Activated B cell treated with CpG ODN at 0.5 μM for 24 hours (primary cell): ENCODE measurements at regions of chr17 and their contacts with region 1.

Region 1: GRCh38 chr17:40647624-40648383 is at the start of gene SMARCE1:
- DNase-seq: peak; percentile 75
- ATAC-seq: peak; percentile 84
- H3K4me3 Mint-ChIP-seq: peak within 1 kb of the TSS; percentile 98
- H3K27ac Mint-ChIP-seq: peak within 1 kb of the TSS; percentile 99
- H3K4me1 Mint-ChIP-seq: peaks cover 48% of the 10 kb centered on the region
- H3K27me3 Mint-ChIP-seq: no peaks in the 10 kb centered on the region
- CTCF ChIP-seq: no peak
- total RNA-seq, gene SMARCE1: 140 TPM in 2 replicates

Region 2: DNA sequence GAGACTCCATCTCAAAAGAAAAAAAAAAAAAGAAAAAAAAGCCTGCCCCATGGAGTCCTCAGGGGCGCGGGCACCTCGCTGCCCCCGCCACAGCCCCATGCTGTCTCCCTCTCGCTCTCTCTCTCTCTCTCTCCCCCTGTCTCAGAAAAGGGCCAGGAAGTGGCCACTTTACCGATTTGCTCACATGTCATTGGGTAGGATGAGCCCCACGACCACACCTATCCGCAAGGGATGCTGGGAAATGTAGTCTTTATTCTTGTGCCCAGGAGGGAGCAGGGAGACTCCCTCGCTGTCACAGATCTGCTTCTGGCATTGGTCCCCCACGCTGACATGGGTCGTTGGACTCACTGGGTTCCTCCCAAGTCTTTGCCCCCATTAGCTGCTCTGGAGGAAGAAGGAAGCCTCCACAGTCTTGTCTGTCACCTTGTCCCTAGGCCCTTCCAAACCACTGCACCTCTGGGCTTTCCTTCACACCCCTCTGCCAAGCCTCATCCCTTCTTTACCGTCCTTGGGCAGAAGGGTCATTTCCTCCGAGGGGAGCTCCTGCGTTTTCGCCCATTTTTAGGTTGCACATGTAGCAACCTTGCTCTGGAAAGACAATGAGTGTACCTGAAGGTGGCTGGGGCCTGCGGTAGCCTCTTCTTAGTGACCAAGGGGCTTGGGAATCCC is 276.4 kb before region 1 on chr17:
- CTCF ChIA-PET with region 1: no interaction called
- POLR2A ChIA-PET with region 1: no interaction called
- intact Hi-C with region 1: no loop called
- DNase-seq: no peak
- ATAC-seq: peak; percentile 82
- H3K4me3 Mint-ChIP-seq: no peak overlapping the region
- H3K27ac Mint-ChIP-seq: no peak overlapping the region
- H3K4me1 Mint-ChIP-seq: peaks cover 2% of the 10 kb centered on the region
- H3K27me3 Mint-ChIP-seq: no peaks in the 10 kb centered on the region
- CTCF ChIP-seq: no peak

Region 3: DNA sequence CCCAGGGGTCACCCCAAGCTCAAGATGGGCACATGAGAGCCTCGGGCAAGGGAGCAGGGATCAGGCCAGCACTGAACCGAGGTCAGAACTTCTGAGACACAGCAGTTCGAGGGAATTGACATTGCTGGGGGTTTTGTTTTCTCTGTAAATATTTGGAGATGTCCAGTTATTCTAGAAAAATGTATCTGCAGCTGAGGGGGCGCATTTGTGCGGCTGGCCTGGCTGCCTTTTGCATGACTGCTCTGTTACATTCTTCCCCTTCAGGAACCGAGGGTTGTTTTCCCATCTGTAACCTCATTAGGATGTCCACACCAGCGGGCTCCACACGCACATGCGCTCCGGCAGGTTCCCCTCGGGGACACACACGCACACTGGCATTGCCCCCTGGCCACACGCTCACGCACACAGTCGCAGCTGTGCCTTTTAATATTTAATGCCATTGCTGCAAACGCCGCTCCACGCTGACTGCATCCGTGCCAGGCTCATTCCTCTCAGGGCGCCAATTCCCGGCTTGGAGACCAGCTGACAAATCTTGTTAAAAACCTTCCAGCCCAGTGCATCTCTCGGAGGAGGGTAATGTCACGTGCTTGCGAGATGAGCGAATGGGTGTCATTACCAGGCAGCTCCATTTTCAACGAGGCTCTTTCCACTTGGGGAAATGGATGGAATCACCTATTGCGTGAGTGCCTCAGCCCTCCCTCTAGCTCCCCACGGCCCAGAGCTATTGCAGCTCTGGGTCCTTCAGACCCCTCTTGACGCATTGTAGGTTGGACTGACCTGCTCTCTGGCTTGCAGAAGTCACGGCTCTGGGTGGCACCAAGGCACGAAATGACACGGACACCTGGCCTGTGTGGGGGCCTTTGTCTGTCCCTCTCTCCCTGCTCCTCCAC is 95.7 kb before region 1 on chr17:
- CTCF ChIA-PET with region 1: no interaction called
- POLR2A ChIA-PET with region 1: interaction called, 16 read pairs
- intact Hi-C with region 1: no loop called
- DNase-seq: peak; percentile 32
- ATAC-seq: peak; percentile 3
- H3K4me3 Mint-ChIP-seq: peak overlapping the region; percentile 36
- H3K27ac Mint-ChIP-seq: peak overlapping the region; percentile 99
- H3K4me1 Mint-ChIP-seq: peaks cover 100% of the 10 kb centered on the region
- H3K27me3 Mint-ChIP-seq: no peaks in the 10 kb centered on the region
- CTCF ChIP-seq: no peak

Region 4: DNA sequence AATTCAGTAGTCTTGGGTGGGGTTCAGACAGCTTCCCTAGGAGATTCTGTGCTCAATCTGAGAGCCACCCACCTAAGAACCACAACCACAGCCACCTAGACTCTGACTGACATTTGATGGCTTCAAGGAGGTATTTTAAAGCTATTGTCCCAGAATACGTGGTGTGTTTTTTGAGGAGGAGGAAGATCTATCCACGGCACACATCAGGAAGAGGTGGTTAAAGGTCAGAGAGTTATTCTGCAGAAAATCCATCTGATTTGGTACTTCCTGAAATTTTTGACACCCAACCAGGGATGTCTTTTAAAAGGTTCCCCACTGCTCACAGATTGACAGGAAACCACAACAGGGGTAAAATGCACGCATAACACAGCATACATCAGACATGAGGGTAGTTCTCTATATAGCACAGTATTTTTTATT is 25.3 kb before region 1 on chr17:
- CTCF ChIA-PET with region 1: interaction called, 3 read pairs
- POLR2A ChIA-PET with region 1: interaction called, 85 read pairs
- intact Hi-C with region 1: loop called (anchors 2 kb)
- DNase-seq: no peak
- ATAC-seq: no peak
- H3K4me3 Mint-ChIP-seq: peak overlapping the region; percentile 53
- H3K27ac Mint-ChIP-seq: peak overlapping the region; percentile 67
- H3K4me1 Mint-ChIP-seq: peaks cover 71% of the 10 kb centered on the region
- H3K27me3 Mint-ChIP-seq: no peaks in the 10 kb centered on the region
- CTCF ChIP-seq: no peak

Region 5: DNA sequence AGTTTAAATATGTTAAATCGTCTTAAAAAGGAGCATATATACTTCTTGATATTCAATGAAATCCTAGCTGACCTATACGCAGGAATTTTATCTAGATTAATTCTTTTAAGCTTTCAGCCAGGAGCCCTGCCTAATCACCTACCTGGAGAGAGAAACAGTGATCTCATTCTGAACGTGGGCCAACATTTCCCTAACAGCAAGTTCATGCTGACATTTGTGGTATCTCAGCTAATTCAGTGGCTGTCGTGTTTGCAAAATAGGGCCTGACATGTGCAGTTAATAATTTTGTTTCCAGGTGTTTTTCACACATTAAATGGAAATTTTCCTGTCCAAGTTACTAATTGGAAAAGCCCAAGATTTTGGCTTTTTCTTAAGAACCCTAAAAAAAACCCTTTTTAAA is 38.4 kb after region 1 on chr17:
- CTCF ChIA-PET with region 1: no interaction called
- POLR2A ChIA-PET with region 1: no interaction called
- intact Hi-C with region 1: no loop called
- DNase-seq: no peak
- ATAC-seq: no peak
- H3K4me3 Mint-ChIP-seq: no peak overlapping the region
- H3K27ac Mint-ChIP-seq: no peak overlapping the region
- H3K4me1 Mint-ChIP-seq: no peaks in the 10 kb centered on the region
- H3K27me3 Mint-ChIP-seq: peaks cover 20% of the 10 kb centered on the region
- CTCF ChIP-seq: no peak

Region 6: DNA sequence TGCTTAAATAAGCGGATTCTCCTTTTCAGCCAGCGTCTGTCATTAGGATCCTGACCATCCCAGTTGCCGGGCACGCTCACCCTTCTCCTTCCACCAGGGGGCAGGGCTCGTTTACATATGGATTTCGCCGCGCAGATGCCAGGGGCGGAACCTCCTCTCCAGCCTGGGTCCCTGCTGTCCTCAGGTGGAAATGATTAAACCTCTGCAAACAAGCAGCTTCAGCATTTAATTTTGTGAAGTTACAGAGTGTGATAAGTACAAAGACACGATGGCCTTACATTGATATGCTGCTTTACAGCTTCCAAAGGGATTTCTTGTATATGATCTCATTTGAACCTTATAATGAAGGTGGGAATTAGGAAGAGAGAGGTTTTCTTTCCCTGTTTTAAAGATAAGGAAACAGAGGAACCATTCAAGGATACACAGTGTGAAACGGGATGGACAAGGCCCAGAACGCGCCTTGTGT is 155.8 kb after region 1 on chr17:
- CTCF ChIA-PET with region 1: no interaction called
- POLR2A ChIA-PET with region 1: no interaction called
- intact Hi-C with region 1: loop called (anchors 5 kb)
- DNase-seq: peak; percentile 54
- ATAC-seq: peak; percentile 94
- H3K4me3 Mint-ChIP-seq: no peak overlapping the region
- H3K27ac Mint-ChIP-seq: no peak overlapping the region
- H3K4me1 Mint-ChIP-seq: peaks cover 3% of the 10 kb centered on the region
- H3K27me3 Mint-ChIP-seq: peaks cover 51% of the 10 kb centered on the region
- CTCF ChIP-seq: peak; percentile 44